Dorsolateral prefrontal cortex (tissue), 120 donors: ENCODE measurements at regions of chr13 and their contacts with region 1.

Region 1: GRCh38 chr13:100235311-100235901 is 146.5 kb downstream of the PCCA start:
- DNase-seq: no peak
- H3K4me3 ChIP-seq: peak overlapping the region in 19 of 59 donors; percentile 1 to 29 (median 8)
- H3K27ac ChIP-seq: peak overlapping the region in 1 of 59 donors; percentile 31
- H3K27me3 ChIP-seq: no peaks in the 10 kb centered on the region
- CTCF ChIP-seq: peak; percentile 59 to 90 (median 74)

Region 2: GRCh38 chr13:99916366-99917103 is 318.9 kb before region 1 on chr13:
- intact Hi-C with region 1: loop called (anchors 5 kb)
- DNase-seq: no peak
- H3K4me3 ChIP-seq: no peak overlapping the region
- H3K27ac ChIP-seq: no peak overlapping the region
- H3K27me3 ChIP-seq: peaks cover 0 to 11% (median 0%) of the 10 kb centered on the region in 45 donors
- CTCF ChIP-seq: peak; percentile 47 to 93 (median 87)

Region 3: DNA sequence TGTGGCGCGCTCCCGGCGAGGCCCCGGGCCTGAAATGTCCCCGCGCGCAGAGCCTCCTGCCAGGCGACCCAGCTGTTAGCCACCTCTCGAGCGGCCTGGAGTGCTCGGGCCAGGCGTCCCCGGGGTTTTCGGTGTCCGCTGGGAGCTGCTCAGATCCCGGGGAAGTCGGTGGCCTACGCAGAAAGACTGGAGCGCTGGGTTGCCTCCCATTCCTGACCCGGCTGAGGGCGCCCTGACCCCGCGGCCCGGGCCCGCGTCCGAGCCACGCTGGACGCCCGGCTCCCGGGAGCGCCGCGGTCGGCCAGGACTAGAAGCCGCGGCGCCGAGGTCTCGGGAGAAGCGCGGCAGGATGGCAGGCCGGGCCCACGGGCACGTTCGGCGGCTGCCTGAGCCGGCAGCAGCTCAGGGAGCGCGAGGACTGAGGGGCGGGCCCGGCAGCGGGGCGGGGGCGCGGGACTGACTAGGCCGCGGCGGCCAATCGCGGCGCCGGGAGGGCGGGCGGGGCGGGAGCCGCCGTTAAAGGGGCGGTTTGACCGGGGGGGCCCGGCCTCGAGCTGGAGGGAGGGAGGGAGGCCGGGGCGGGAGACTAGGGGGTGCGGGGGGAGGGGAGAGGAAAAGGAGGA is 255.1 kb before region 1 on chr13:
- intact Hi-C with region 1: loop called in 1 of 2 experiments (anchors 5 kb)
- DNase-seq: peak in 3 of 10 donors; percentile 36 to 91 (median 75)
- H3K4me3 ChIP-seq: peak overlapping the region; percentile 42 to 77 (median 64)
- H3K27ac ChIP-seq: peak overlapping the region in 58 of 59 donors; percentile 49 to 98 (median 88)
- H3K27me3 ChIP-seq: peaks cover 0 to 100% (median 83%) of the 10 kb centered on the region in 45 donors
- CTCF ChIP-seq: peak in 1 of 56 donors; percentile 12

Region 4: GRCh38 chr13:100514788-100515409 is 279.5 kb after region 1 on chr13:
- intact Hi-C with region 1: loop called in 1 of 2 experiments (anchors 10 kb)
- DNase-seq: peak; percentile 78 to 92 (median 87)
- H3K4me3 ChIP-seq: peak overlapping the region in 28 of 59 donors; percentile 2 to 51 (median 24)
- H3K27ac ChIP-seq: peak overlapping the region in 42 of 59 donors; percentile 1 to 86 (median 62)
- H3K27me3 ChIP-seq: no peaks in the 10 kb centered on the region
- CTCF ChIP-seq: peak; percentile 43 to 96 (median 90)